Heart right ventricle (tissue), 16 donors: ENCODE measurements at regions of chr3 and their contacts with region 1.

Region 1: DNA sequence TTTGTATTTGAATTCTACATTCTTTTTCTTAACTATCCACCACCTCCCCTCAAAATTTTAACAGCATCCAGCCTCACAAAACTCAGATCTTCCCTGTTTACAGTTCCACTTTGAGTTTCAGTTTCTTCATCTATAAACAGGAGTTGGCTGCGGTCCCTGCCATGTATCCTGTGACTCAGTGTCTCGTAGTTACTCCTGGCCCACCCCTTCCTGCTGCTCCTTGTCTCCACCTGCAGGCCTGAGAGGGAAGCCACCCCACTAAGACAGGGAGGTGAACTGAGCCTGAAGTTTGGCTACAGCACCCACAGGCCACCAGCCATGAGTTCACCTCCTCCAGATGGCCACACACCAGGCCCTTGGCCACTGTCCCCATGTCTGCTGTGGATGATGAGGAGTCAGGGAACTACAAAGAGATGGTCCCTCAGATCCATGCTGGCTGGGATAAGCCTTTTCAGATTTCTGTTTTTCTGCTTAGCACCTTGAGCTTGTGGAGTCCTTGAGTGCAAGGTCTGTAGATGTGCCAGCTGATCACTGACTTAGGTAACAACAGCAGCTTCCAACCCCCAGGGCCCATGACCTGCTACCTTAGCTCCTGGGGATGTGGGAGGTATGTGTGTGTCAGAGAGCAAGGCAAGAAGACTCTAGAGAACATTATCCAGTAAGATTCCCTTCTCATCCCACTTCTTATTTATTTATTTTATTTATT is 37.5 kb downstream of the CD86 start:
- DNase-seq: peak; percentile 13 to 15
- ATAC-seq: peak in 4 of 8 donors; percentile 40 to 55 (median 46)
- H3K4me3 ChIP-seq: no peak overlapping the region
- H3K27ac ChIP-seq: peak overlapping the region in 1 of 10 donors; percentile 26
- H3K4me1 ChIP-seq: peaks cover 0 to 16% (median 0%) of the 10 kb centered on the region in 9 donors
- H3K27me3 ChIP-seq: peaks cover 0 to 7% (median 0%) of the 10 kb centered on the region in 7 donors
- CTCF ChIP-seq: peak in 3 of 9 donors; percentile 12 to 61 (median 25)

Region 2: GRCh38 chr3:122151480-122151879 is 58.9 kb after region 1 on chr3:
- intact Hi-C with region 1: no loop called
- DNase-seq: no peak
- ATAC-seq: no peak
- H3K4me3 ChIP-seq: no peak overlapping the region
- H3K27ac ChIP-seq: no peak overlapping the region
- H3K4me1 ChIP-seq: no peaks in the 10 kb centered on the region
- H3K27me3 ChIP-seq: no peaks in the 10 kb centered on the region
- CTCF ChIP-seq: no peak

Region 3: DNA sequence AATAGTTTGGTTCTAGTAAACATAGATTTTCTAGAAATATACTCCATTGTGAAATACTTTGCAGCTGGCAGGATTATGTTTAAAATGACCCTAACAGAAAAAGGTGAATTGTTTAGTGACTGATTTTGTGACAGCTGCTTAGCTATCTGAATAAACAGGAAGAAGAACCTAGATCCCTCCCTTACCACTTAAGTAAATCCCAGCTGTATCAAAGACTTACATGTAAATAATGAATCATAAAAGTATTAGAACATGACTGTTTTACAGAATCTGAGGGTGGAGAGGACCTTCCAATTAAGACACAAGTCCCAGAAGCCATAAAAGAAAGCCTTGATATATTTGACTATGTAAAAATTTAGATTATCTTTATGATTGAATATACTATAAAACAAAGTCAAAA is 718.1 kb after region 1 on chr3:
- intact Hi-C with region 1: no loop called
- DNase-seq: no peak
- ATAC-seq: no peak
- H3K4me3 ChIP-seq: no peak overlapping the region
- H3K27ac ChIP-seq: no peak overlapping the region
- H3K4me1 ChIP-seq: no peaks in the 10 kb centered on the region
- H3K27me3 ChIP-seq: no peaks in the 10 kb centered on the region
- CTCF ChIP-seq: no peak

Region 4: DNA sequence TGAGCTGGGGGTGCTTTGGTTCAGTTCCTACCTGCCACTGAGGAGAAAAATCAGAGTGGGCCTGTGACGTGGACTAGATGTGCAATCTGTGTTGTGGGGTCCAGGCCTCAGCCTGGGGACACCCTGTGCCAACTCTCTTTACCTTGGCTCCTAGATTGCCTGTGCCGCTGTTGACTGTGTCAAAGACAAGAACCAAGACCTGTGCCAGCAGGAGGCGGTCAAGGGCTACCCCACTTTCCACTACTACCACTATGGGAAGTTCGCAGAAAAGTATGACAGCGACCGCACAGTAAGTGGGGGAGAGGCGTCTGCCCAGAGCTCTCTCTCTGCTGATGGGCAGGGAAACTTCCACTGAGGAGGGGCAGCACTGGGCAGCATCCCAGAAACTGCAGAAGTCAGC is 1068.6 kb after region 1 on chr3:
- intact Hi-C with region 1: loop called in 1 of 10 experiments (anchors 10 kb)
- DNase-seq: no peak
- ATAC-seq: no peak
- H3K4me3 ChIP-seq: no peak overlapping the region
- H3K27ac ChIP-seq: no peak overlapping the region
- H3K4me1 ChIP-seq: peaks cover 0 to 16% (median 7%) of the 10 kb centered on the region in 9 donors
- H3K27me3 ChIP-seq: no peaks in the 10 kb centered on the region
- CTCF ChIP-seq: no peak